Natural killer cell (primary cell): ENCODE measurements at regions of chr10 and their contacts with region 1.

Region 1: GRCh38 chr10:78047314-78047891 is 13.7 kb downstream of the RPS24 start:
- DNase-seq: peak; percentile 79 to 88
- ATAC-seq: peak; percentile 87 to 99 (median 96)
- H3K4me3 ChIP-seq: no peak overlapping the region
- H3K4me3 Mint-ChIP-seq: no peak overlapping the region
- H3K27ac ChIP-seq: no peak overlapping the region
- H3K27ac Mint-ChIP-seq: no peak overlapping the region
- H3K4me1 ChIP-seq: peaks cover 8% of the 10 kb centered on the region
- H3K4me1 Mint-ChIP-seq: peaks cover 12 to 19% of the 10 kb centered on the region in 2 donors
- H3K27me3 ChIP-seq: no peaks in the 10 kb centered on the region
- H3K27me3 Mint-ChIP-seq: no peaks in the 10 kb centered on the region
- CTCF ChIP-seq: peak; percentile 87

Region 2: DNA sequence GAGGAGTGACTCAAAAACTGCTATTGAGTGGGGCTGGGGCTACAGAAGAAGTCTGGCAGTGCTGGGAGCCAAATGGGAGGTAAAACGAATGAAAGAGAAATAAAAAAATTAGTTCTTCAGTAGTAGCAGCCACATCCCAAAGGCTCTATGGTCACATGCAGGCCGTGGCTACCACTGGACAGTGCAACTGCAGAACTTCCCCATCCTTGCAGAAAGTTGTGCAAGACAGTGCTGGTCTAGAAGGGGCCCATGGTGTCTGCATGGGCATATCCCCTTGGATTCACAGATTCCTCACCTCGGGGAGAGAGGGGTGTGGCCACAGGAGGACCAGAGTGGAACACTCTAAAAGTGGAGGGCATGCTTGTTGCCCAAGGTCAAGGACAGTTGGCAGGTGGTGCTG is 33.9 kb after region 1 on chr10:
- intact Hi-C with region 1: no loop called
- DNase-seq: no peak
- ATAC-seq: no peak
- H3K4me3 ChIP-seq: no peak overlapping the region
- H3K4me3 Mint-ChIP-seq: no peak overlapping the region
- H3K27ac ChIP-seq: no peak overlapping the region
- H3K27ac Mint-ChIP-seq: no peak overlapping the region
- H3K4me1 ChIP-seq: no peaks in the 10 kb centered on the region
- H3K4me1 Mint-ChIP-seq: no peaks in the 10 kb centered on the region
- H3K27me3 ChIP-seq: no peaks in the 10 kb centered on the region
- H3K27me3 Mint-ChIP-seq: no peaks in the 10 kb centered on the region
- CTCF ChIP-seq: no peak

Region 3: DNA sequence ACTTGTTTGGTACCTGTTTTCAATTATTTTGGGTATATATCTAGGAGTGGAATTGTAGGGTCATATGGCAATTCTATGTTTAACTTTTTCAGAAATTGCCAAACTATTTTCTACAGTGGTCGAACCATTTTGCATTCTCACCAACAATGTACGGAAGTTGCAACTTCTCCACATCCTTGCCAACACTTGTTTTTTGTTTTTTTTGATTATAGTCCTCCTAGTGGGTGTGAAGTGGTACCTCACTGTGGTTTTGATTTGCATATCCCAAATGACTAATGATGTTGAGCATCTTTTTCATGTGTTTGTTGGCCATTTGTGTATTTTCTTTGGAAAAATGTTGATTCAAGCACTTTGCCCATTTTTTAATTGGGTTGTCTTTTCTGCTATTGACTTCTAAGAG is 108.3 kb after region 1 on chr10:
- intact Hi-C with region 1: loop called (anchors 5 kb)
- DNase-seq: peak in 1 of 2 donors; percentile 3
- ATAC-seq: peak; percentile 54 to 88 (median 58)
- H3K4me3 ChIP-seq: no peak overlapping the region
- H3K4me3 Mint-ChIP-seq: no peak overlapping the region
- H3K27ac ChIP-seq: no peak overlapping the region
- H3K27ac Mint-ChIP-seq: no peak overlapping the region
- H3K4me1 ChIP-seq: no peaks in the 10 kb centered on the region
- H3K4me1 Mint-ChIP-seq: peaks cover 0 to 11% of the 10 kb centered on the region in 2 donors
- H3K27me3 ChIP-seq: no peaks in the 10 kb centered on the region
- H3K27me3 Mint-ChIP-seq: peaks cover 0 to 3% of the 10 kb centered on the region in 2 donors
- CTCF ChIP-seq: no peak

Region 4: GRCh38 chr10:78302989-78303854 is 255.8 kb after region 1 on chr10:
- intact Hi-C with region 1: no loop called
- DNase-seq: peak; percentile 94 to 96
- ATAC-seq: peak; percentile 84 to 96 (median 85)
- H3K4me3 ChIP-seq: peak overlapping the region; percentile 64
- H3K4me3 Mint-ChIP-seq: peak overlapping the region; percentile 87
- H3K27ac ChIP-seq: peak overlapping the region; percentile 89
- H3K27ac Mint-ChIP-seq: peak overlapping the region; percentile 92 to 98
- H3K4me1 ChIP-seq: peaks cover 30% of the 10 kb centered on the region
- H3K4me1 Mint-ChIP-seq: peaks cover 10 to 23% of the 10 kb centered on the region in 2 donors
- H3K27me3 ChIP-seq: no peaks in the 10 kb centered on the region
- H3K27me3 Mint-ChIP-seq: peaks cover 11 to 14% of the 10 kb centered on the region in 2 donors
- CTCF ChIP-seq: peak; percentile 79

Region 5: GRCh38 chr10:78437998-78438906 is 390.8 kb after region 1 on chr10:
- intact Hi-C with region 1: loop called (anchors 10 kb)
- DNase-seq: peak in 1 of 2 donors; percentile 32
- ATAC-seq: peak in 2 of 3 donors; percentile 40 to 49
- H3K4me3 ChIP-seq: no peak overlapping the region
- H3K4me3 Mint-ChIP-seq: no peak overlapping the region
- H3K27ac ChIP-seq: no peak overlapping the region
- H3K27ac Mint-ChIP-seq: peak overlapping the region in 1 of 2 donors; percentile 31
- H3K4me1 ChIP-seq: no peaks in the 10 kb centered on the region
- H3K4me1 Mint-ChIP-seq: peaks cover 0 to 19% of the 10 kb centered on the region in 2 donors
- H3K27me3 ChIP-seq: no peaks in the 10 kb centered on the region
- H3K27me3 Mint-ChIP-seq: peaks cover 0 to 17% of the 10 kb centered on the region in 2 donors
- CTCF ChIP-seq: no peak

Region 6: GRCh38 chr10:78657163-78657861 is 609.9 kb after region 1 on chr10:
- intact Hi-C with region 1: loop called (anchors 1 kb)
- DNase-seq: peak; percentile 44 to 70
- ATAC-seq: peak in 2 of 3 donors; percentile 73 to 81
- H3K4me3 ChIP-seq: no peak overlapping the region
- H3K4me3 Mint-ChIP-seq: no peak overlapping the region
- H3K27ac ChIP-seq: no peak overlapping the region
- H3K27ac Mint-ChIP-seq: no peak overlapping the region
- H3K4me1 ChIP-seq: no peaks in the 10 kb centered on the region
- H3K4me1 Mint-ChIP-seq: no peaks in the 10 kb centered on the region
- H3K27me3 ChIP-seq: no peaks in the 10 kb centered on the region
- H3K27me3 Mint-ChIP-seq: peaks cover 15 to 26% of the 10 kb centered on the region in 2 donors
- CTCF ChIP-seq: peak; percentile 63